GM10248 (cell line): ENCODE measurements at regions of chr13 and their contacts with region 1.

Region 1: GRCh38 chr13:100588331-100589177 is at the start of gene GGACT:
- DNase-seq: peak; percentile 93
- CTCF ChIP-seq: peak; percentile 89

Region 2: GRCh38 chr13:100476963-100477362 is 111.6 kb before region 1 on chr13:
- CTCF ChIA-PET with region 1: no interaction called
- POLR2A ChIA-PET with region 1: no interaction called
- DNase-seq: no peak
- CTCF ChIP-seq: no peak

Region 3: GRCh38 chr13:100602493-100603111 is 14.0 kb after region 1 on chr13:
- CTCF ChIA-PET with region 1: interaction called, 14 read pairs
- POLR2A ChIA-PET with region 1: no interaction called
- DNase-seq: no peak
- CTCF ChIP-seq: no peak